ENCODE measurements at regions of chr6 and their contacts with region 1.

Region 1: GRCh38 chr6:33014841-33015634 is 5.6 kb upstream of the HLA-DOA start:
- DNase-seq: peak in 1 of 2 experiments; percentile 25
- H3K4me3 ChIP-seq: no peak overlapping the region
- H3K27ac ChIP-seq: no peak overlapping the region
- H3K4me1 ChIP-seq: peaks cover 2 to 10% (median 4%) of the 10 kb centered on the region in 4 experiments; a peak in 6 of 7 replicates
- H3K27me3 ChIP-seq: no peaks in the 10 kb centered on the region
- CTCF ChIP-seq: peak in 2 of 3 experiments; percentile 72 to 76; a peak in 3 of 4 replicates
- EP300 ChIP-seq: no peak
- POLR2A ChIP-seq: no peak
- RAD21 ChIP-seq: peak; percentile 83 to 90

Region 2: GRCh38 chr6:33000055-33000454 is 15.0 kb before region 1 on chr6:
- CTCF ChIA-PET with region 1: interaction called, 25 read pairs
- POLR2A ChIA-PET with region 1: interaction called, 6 read pairs
- DNase-seq: peak in 1 of 2 experiments; percentile 41
- H3K4me3 ChIP-seq: no peak overlapping the region
- H3K27ac ChIP-seq: no peak overlapping the region
- H3K4me1 ChIP-seq: no peaks in the 10 kb centered on the region
- H3K27me3 ChIP-seq: peaks cover 0 to 2% (median 0%) of the 10 kb centered on the region in 4 experiments; a peak in 2 of 7 replicates
- CTCF ChIP-seq: peak; percentile 46 to 93 (median 91)
- EP300 ChIP-seq: no peak
- POLR2A ChIP-seq: no peak
- RAD21 ChIP-seq: peak; percentile 96 to 97

Region 3: DNA sequence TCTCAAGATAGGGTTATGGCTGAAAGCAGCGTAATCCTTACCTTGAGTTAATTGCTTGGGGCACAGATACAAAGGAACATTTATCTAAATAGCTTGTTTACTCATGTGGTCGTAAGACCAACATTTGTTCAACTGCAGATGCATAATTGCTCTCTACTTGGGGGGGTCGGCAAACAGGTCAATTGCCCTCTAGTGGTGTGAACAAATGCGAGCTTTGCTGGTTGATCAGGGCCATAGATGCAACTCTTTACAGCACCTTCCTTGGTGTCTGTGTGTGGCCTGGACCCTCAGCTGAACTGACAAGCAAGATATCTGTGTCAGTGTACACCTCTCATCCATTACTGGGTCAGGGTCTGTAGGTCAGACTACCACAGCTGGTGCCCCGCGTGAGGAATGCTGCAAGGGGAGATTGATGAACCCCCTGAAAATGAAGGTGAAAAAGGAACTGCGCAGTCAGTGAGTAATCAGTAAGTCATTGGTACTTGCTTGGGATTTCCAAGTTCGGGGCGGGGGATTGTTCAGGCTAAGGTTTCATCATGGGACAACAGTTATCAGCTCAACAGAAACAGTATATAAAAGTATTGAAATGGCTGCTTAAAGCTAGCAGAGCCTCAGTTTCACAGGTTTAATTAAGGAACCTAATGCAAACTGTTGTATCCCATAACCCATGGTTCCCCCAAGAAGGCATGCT is 34.4 kb after region 1 on chr6:
- CTCF ChIA-PET with region 1: interaction called, 38 read pairs
- POLR2A ChIA-PET with region 1: no interaction called
- DNase-seq: no peak
- H3K4me3 ChIP-seq: no peak overlapping the region
- H3K27ac ChIP-seq: no peak overlapping the region
- H3K4me1 ChIP-seq: peaks cover 6 to 10% (median 7%) of the 10 kb centered on the region in 4 experiments; a peak in 4 of 7 replicates
- H3K27me3 ChIP-seq: no peaks in the 10 kb centered on the region
- CTCF ChIP-seq: peak; percentile 46 to 72 (median 56)
- EP300 ChIP-seq: no peak
- POLR2A ChIP-seq: no peak
- RAD21 ChIP-seq: peak; percentile 20 to 23; a peak in 2 of 4 replicates

Region 4: DNA sequence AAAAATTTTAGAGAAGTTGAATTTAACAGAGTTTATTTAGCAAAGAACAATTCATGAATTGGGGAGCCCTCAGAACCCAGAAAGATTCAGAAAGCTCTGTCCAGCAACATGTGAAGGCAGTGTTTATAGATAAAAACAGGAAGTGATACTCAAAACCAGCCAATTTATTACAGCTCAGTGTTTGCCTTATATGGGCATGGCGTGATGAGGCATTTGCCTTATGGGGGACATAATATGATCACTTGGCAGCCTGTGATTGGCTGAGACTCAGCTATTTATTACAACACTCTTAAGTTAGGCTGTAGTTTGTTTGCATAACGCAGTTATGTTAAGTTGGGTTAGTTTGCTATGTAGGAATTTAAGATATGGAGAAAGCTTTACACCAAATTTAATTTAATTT is 46.9 kb after region 1 on chr6:
- CTCF ChIA-PET with region 1: no interaction called
- POLR2A ChIA-PET with region 1: no interaction called
- DNase-seq: no peak
- H3K4me3 ChIP-seq: no peak overlapping the region
- H3K27ac ChIP-seq: no peak overlapping the region
- H3K4me1 ChIP-seq: 0 out of 7 replicates have a peak, but pooled peaks cover 0 to 2% (median 0%) of the 10 kb centered on the region in 4 experiments
- H3K27me3 ChIP-seq: no peaks in the 10 kb centered on the region
- CTCF ChIP-seq: no peak
- EP300 ChIP-seq: no peak
- POLR2A ChIP-seq: no peak
- RAD21 ChIP-seq: no peak

Region 5: DNA sequence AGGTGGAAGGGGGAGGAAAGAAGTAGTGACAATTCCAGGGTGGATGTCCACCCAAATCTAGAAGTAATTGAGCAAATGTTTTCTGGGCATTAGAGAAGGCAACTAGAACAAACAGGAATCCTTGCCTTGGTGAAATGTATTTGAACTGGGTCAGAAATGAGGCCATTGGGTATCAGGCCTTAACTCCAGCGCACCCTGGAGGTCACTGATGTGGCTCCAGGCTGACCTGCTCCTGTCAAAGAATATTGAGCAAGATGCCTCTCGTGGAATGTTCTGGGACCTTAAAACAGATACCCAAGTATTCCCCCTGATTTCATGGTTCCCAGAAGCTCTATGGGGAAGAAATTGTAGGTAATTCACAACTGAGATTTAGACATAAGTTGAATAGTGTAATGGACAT is 67.7 kb after region 1 on chr6:
- CTCF ChIA-PET with region 1: interaction called, 118 read pairs
- POLR2A ChIA-PET with region 1: interaction called, 19 read pairs
- DNase-seq: peak in 1 of 2 experiments; percentile 65
- H3K4me3 ChIP-seq: no peak overlapping the region
- H3K27ac ChIP-seq: no peak overlapping the region
- H3K4me1 ChIP-seq: peaks cover 2 to 8% (median 5%) of the 10 kb centered on the region in 4 experiments; a peak in 6 of 7 replicates
- H3K27me3 ChIP-seq: peaks cover 0 to 8% (median 3%) of the 10 kb centered on the region in 4 experiments; a peak in 4 of 7 replicates
- CTCF ChIP-seq: peak; percentile 81 to 86 (median 84)
- EP300 ChIP-seq: no peak
- POLR2A ChIP-seq: no peak
- RAD21 ChIP-seq: peak; percentile 74 to 82

Region 6: GRCh38 chr6:33091957-33092356 is 76.9 kb after region 1 on chr6:
- CTCF ChIA-PET with region 1: interaction called, 15 read pairs
- POLR2A ChIA-PET with region 1: no interaction called
- DNase-seq: peak in 1 of 2 experiments; percentile 91
- H3K4me3 ChIP-seq: no peak overlapping the region
- H3K27ac ChIP-seq: no peak overlapping the region
- H3K4me1 ChIP-seq: peaks cover 0 to 2% (median 0%) of the 10 kb centered on the region in 4 experiments; a peak in 1 of 7 replicates
- H3K27me3 ChIP-seq: no peaks in the 10 kb centered on the region
- CTCF ChIP-seq: peak; percentile 97 to 99 (median 99)
- EP300 ChIP-seq: no peak
- POLR2A ChIP-seq: no peak
- RAD21 ChIP-seq: peak; percentile 74 to 79

Region 7: GRCh38 chr6:33147807-33148666 is 133.0 kb after region 1 on chr6:
- CTCF ChIA-PET with region 1: interaction called, 65 read pairs
- POLR2A ChIA-PET with region 1: interaction called, 5 read pairs
- DNase-seq: no peak
- H3K4me3 ChIP-seq: no peak overlapping the region
- H3K27ac ChIP-seq: no peak overlapping the region
- H3K4me1 ChIP-seq: peaks cover 0 to 2% (median 0%) of the 10 kb centered on the region in 4 experiments; a peak in 1 of 7 replicates
- H3K27me3 ChIP-seq: no peaks in the 10 kb centered on the region
- CTCF ChIP-seq: peak in 2 of 3 experiments; percentile 61 to 72; a peak in 3 of 4 replicates
- EP300 ChIP-seq: no peak
- POLR2A ChIP-seq: no peak
- RAD21 ChIP-seq: peak; percentile 75 to 80

Region 8: DNA sequence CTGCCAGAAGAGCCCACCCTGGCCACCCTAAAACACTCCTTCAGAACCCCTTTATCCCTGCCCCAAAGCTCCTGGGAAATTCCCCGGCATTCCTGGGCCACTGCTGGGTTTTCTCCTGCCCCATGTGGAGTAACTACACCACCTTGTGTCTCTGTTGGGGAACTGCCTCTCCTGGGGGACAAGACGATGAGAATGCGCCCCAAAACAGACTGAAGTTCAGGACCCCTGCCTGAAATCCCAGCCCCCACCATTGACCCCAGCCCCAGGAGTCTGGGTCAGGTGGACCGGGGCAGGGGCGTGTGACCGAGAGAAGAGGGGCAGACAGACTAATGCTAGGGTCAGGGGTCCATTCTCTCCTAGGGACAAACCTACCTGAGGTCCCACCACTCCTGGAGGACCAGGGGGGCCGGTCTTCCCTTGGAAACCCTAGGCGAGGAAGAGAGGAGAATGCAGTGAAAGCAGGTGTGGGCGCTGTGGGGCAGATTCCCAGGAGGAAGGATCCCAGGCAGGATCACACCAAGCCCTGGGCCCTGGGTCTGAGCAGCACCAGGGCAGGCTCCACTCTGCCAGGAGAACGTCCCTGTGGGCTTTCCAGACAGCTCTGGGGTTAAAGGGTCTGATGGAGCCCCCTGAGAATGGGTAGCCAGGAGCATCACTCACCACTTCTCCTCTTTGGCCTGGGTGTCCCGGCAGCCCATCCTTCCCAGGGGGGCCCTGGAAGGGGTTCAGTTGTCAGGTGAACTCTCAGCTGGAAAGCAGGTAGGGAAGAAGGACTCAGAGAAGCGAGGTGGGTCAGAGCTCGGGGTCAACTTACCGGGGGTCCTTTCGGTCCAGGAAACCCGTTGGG is 157.9 kb after region 1 on chr6:
- CTCF ChIA-PET with region 1: interaction called, 34 read pairs
- POLR2A ChIA-PET with region 1: no interaction called
- DNase-seq: peak in 1 of 2 experiments; percentile 72
- H3K4me3 ChIP-seq: no peak overlapping the region
- H3K27ac ChIP-seq: no peak overlapping the region
- H3K4me1 ChIP-seq: no peaks in the 10 kb centered on the region; a peak in 2 of 7 replicates
- H3K27me3 ChIP-seq: no peaks in the 10 kb centered on the region
- CTCF ChIP-seq: peak in 2 of 3 experiments; percentile 87 to 93; a peak in 3 of 4 replicates
- EP300 ChIP-seq: no peak
- POLR2A ChIP-seq: no peak
- RAD21 ChIP-seq: peak; percentile 93 to 97

Measured in H1 (cell line).